ENCODE measurements at regions of chr14 and their contacts with region 1.

Region 1: GRCh38 chr14:71555654-71556559 is 376.3 kb upstream of the RGS6 start:
- DNase-seq: peak; percentile 65
- H3K4me3 Mint-ChIP-seq: peak overlapping the region; percentile 35
- H3K27ac Mint-ChIP-seq: peak overlapping the region; percentile 92
- H3K4me1 Mint-ChIP-seq: peaks cover 71% of the 10 kb centered on the region
- H3K27me3 Mint-ChIP-seq: no peaks in the 10 kb centered on the region

Region 2: DNA sequence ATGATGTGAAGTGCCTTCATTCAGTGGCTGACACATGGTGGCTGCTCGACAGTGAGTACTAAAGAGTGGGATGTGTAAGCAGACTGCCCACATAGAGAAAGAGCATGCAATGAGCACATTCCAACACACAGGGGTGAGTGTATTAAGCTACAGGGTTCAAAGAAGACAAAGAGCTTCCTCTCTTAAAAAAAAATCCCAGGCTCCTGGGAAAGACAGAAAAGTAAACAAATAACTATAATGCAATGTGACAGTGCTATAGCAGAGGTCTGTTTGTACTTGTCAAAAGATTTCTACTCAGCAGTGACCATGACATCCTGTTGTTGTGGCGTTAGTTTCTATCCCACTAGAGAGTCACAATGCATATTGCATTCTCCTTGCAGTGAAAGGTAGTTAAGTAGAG is 661.0 kb before region 1 on chr14:
- intact Hi-C with region 1: loop called (anchors 5 kb)
- DNase-seq: no peak
- H3K4me3 Mint-ChIP-seq: peak overlapping the region; percentile 72
- H3K27ac Mint-ChIP-seq: peak overlapping the region; percentile 96
- H3K4me1 Mint-ChIP-seq: peaks cover 81% of the 10 kb centered on the region
- H3K27me3 Mint-ChIP-seq: no peaks in the 10 kb centered on the region

Region 3: GRCh38 chr14:71267007-71267513 is 288.8 kb before region 1 on chr14:
- intact Hi-C with region 1: loop called (anchors 1 kb)
- DNase-seq: no peak
- H3K4me3 Mint-ChIP-seq: peak overlapping the region; percentile 41
- H3K27ac Mint-ChIP-seq: peak overlapping the region; percentile 86
- H3K4me1 Mint-ChIP-seq: peaks cover 44% of the 10 kb centered on the region
- H3K27me3 Mint-ChIP-seq: no peaks in the 10 kb centered on the region

Region 4: GRCh38 chr14:71399057-71399487 is 156.8 kb before region 1 on chr14:
- intact Hi-C with region 1: loop called (anchors 1 kb)
- DNase-seq: no peak
- H3K4me3 Mint-ChIP-seq: peak overlapping the region; percentile 37
- H3K27ac Mint-ChIP-seq: peak overlapping the region; percentile 92
- H3K4me1 Mint-ChIP-seq: peaks cover 54% of the 10 kb centered on the region
- H3K27me3 Mint-ChIP-seq: no peaks in the 10 kb centered on the region

Region 5: GRCh38 chr14:71497645-71498086 is 58.2 kb before region 1 on chr14:
- intact Hi-C with region 1: loop called (anchors 1 kb)
- DNase-seq: no peak
- H3K4me3 Mint-ChIP-seq: no peak overlapping the region
- H3K27ac Mint-ChIP-seq: peak overlapping the region; percentile 33
- H3K4me1 Mint-ChIP-seq: peaks cover 21% of the 10 kb centered on the region
- H3K27me3 Mint-ChIP-seq: no peaks in the 10 kb centered on the region

Region 6: DNA sequence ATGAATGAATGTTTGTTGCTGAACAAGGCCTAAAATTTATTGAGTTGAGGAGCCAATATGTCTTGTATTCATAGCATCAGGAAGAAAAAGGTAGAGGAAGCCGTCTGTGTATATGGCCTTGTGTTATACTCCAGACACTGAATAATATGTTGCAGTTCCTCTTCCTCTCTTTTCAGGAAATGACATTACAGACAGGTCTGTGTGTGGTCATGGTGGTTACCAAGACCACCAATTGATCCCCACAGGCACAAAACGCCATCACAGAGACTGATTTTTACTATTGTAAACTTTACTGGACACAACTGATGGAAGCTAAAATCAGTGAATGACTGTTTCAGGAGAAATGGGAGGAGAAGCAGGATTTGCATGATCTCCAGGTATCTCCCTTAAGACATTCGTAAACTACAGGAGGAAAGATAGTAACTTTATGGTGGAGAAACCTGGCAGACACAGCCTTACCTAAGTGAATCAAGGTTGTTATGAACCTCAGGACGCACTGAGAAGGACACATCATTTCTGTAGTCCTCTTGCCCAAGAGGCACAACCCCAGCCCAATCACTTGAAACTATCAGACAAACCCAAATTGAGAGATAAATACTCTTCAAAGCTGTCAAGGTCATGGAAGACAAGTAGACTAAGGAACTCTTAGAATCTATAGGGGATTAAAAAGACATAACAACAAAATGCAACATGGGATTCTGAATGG is 42.2 kb after region 1 on chr14:
- intact Hi-C with region 1: loop called (anchors 1 kb)
- DNase-seq: no peak
- H3K4me3 Mint-ChIP-seq: peak overlapping the region; percentile 1
- H3K27ac Mint-ChIP-seq: peak overlapping the region; percentile 29
- H3K4me1 Mint-ChIP-seq: peaks cover 63% of the 10 kb centered on the region
- H3K27me3 Mint-ChIP-seq: no peaks in the 10 kb centered on the region

Region 7: DNA sequence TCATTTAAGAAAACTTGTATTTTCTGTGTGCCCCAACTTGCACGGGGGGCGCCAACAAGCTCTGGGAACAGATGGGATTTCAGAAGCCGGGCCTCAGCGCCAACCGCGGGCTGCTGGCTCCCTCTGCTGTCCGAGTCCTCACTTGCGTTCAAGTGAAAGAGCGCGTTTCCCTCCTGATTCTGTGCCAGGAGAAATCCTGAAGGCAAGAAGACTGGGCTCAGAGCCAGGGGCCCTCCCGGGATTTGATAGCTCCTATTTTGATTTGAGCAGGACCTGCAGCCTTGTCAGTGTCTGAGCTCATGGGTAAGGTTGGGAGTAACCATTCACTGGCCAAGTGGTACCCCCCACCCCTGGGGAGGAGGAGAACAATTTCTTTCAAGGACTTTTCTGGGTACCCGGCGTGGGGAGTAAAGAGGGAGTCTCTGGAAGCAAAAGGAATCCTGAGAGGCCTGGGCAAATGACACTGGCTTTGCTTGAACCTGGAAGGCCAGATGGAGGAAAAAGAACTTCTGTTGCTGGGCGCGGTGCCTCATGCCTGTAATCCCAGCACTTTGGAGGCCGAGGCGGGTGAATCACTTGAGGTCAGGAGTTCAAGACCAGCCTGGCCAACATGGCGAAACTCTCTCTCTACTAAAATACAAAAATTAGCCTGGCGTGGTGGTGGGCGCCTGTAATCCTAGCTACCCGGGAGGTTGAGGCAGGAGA is 197.4 kb after region 1 on chr14:
- intact Hi-C with region 1: loop called (anchors 5 kb)
- DNase-seq: peak; percentile 55
- H3K4me3 Mint-ChIP-seq: peak overlapping the region; percentile 26
- H3K27ac Mint-ChIP-seq: no peak overlapping the region
- H3K4me1 Mint-ChIP-seq: peaks cover 18% of the 10 kb centered on the region
- H3K27me3 Mint-ChIP-seq: peaks cover 2% of the 10 kb centered on the region

Region 8: GRCh38 chr14:71834284-71835204 is 278.6 kb after region 1 on chr14:
- intact Hi-C with region 1: no loop called
- DNase-seq: no peak
- H3K4me3 Mint-ChIP-seq: no peak overlapping the region
- H3K27ac Mint-ChIP-seq: no peak overlapping the region
- H3K4me1 Mint-ChIP-seq: no peaks in the 10 kb centered on the region
- H3K27me3 Mint-ChIP-seq: peaks cover 24% of the 10 kb centered on the region

Measured in activated T-helper 2 cell treated with anti-CD3 and anti-CD28 coated beads, Interferon-gamma antibody, Interleukin-2, Interleukin-4, amounts not matched to agents 10 μg/mL and 5 μg/mL and 100 μg/mL, durations not matched to agents 14 hours and 24 hours and 36 hours (primary cell).